Endothelial cell of umbilical vein (primary cell): ENCODE measurements at regions of chr15 and their contacts with region 1.

Region 1: GRCh38 chr15:93997084-93997918 is 234.1 kb upstream of the MCTP2 start:
- DNase-seq: peak; percentile 6
- H3K4me3 ChIP-seq: no peak overlapping the region
- H3K27ac ChIP-seq: no peak overlapping the region
- H3K4me1 ChIP-seq: no peaks in the 10 kb centered on the region
- H3K27me3 ChIP-seq: no peaks in the 10 kb centered on the region
- CTCF ChIP-seq: peak; percentile 37 to 42
- POLR2A ChIP-seq: no peak

Region 2: GRCh38 chr15:94042180-94042928 is 45.1 kb after region 1 on chr15:
- CTCF ChIA-PET with region 1: no interaction called
- POLR2A ChIA-PET with region 1: no interaction called
- dilution Hi-C with region 1: no loop called
- intact Hi-C with region 1: no loop called
- DNase-seq: no peak
- H3K4me3 ChIP-seq: no peak overlapping the region
- H3K27ac ChIP-seq: no peak overlapping the region
- H3K4me1 ChIP-seq: no peaks in the 10 kb centered on the region
- H3K27me3 ChIP-seq: no peaks in the 10 kb centered on the region
- CTCF ChIP-seq: no peak
- POLR2A ChIP-seq: no peak

Region 3: DNA sequence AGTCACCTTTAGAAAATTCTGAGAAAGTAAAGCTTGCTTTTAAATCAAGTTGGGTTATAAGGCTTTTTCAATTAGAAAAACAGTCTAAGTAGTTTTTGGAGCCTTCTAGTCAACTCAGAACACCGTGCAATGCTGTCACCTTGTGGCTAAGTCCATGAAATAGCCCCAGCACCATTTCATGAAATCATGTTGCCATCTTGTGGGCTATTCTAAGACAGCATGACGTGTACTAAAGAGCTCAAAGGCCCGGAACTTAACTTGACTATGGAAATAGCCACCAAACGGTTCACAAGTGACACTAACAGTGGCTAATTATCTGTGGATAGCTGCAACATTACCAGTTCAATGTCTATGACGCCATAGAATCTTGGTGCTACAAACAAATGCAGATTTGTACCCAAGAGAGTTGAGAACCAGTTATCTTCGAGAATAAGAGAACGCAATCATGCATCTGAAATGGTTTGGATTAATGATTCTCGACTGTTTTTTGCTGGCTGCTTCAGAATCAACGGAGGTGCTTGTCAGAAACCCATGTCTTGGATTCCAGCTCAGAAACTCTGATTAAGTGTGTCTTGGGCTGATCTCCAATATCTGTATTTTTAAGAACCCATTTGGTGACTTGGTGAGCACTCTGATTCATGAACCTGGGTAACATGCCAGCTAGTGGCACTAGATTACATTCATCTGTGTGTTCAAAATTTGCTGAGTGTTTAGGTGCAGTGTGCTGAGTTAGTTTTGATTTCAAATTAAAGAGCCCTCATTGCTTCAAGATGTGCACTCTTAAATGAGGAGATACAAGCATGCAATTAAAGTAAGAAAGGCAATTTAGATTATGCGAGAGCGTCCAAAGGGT is 122.8 kb after region 1 on chr15:
- CTCF ChIA-PET with region 1: no interaction called
- POLR2A ChIA-PET with region 1: no interaction called
- dilution Hi-C with region 1: no loop called
- intact Hi-C with region 1: loop called (anchors 1 kb)
- DNase-seq: peak; percentile 65
- H3K4me3 ChIP-seq: no peak overlapping the region
- H3K27ac ChIP-seq: no peak overlapping the region
- H3K4me1 ChIP-seq: no peaks in the 10 kb centered on the region
- H3K27me3 ChIP-seq: no peaks in the 10 kb centered on the region
- CTCF ChIP-seq: peak; percentile 62 to 63
- POLR2A ChIP-seq: no peak